ENCODE measurements at regions of chr17 and their contacts with region 1.

Region 1: GRCh38 chr17:57255776-57256681 is at the start of gene MSI2:
- DNase-seq: peak; percentile 82 to 96 (median 90)
- ATAC-seq: peak; percentile 71
- H3K4me3 ChIP-seq: peak within 1 kb of the TSS; percentile 74
- H3K4me3 Mint-ChIP-seq: peak within 1 kb of the TSS; percentile 99
- H3K27ac ChIP-seq: peak within 1 kb of the TSS; percentile 72 to 82
- H3K27ac Mint-ChIP-seq: peak within 1 kb of the TSS; percentile 98
- H3K4me1 ChIP-seq: peaks cover 35% of the 10 kb centered on the region
- H3K4me1 Mint-ChIP-seq: peaks cover 48% of the 10 kb centered on the region
- H3K27me3 ChIP-seq: no peaks in the 10 kb centered on the region
- H3K27me3 Mint-ChIP-seq: no peaks in the 10 kb centered on the region
- CTCF ChIP-seq: no peak
- total RNA-seq, gene MSI2: 129 to 132 TPM

Region 2: DNA sequence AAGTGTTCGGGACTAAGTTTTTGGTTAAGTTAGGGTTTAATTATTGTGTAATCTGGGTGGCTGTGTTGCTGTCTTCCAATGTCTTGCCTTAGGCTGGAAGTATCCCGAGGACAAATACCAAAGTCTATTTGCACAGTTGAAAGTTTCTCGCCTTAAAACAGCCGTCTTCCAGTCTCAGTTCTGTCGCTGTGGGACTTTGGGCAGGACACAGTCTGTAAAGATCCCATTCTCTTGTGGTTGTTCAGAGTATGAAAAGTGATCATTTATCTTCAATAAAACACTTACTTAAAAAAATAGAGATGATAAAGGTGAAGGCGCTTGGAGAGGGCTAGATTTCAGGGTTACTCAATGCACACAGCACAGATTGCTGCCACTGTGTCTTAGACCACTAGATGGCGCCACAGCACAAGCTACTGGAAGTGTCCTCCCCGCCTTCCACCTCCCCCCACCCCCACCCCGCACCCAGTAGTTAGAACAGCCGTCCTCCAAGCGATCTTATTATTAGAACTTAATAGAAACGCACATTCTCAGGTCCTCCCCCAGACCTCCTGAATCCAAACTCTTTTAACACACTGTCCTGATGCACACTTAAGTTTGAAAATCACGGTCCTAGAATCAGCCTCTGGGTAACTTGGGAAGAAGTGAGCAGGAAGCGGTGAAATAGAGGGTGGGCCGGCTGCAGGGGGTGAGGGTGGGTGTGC is 125.1 kb before region 1 on chr17:
- CTCF ChIA-PET with region 1: no interaction called
- POLR2A ChIA-PET with region 1: no interaction called
- intact Hi-C with region 1: no loop called
- DNase-seq: peak; percentile 72 to 91 (median 80)
- ATAC-seq: peak; percentile 97
- H3K4me3 ChIP-seq: no peak overlapping the region
- H3K4me3 Mint-ChIP-seq: no peak overlapping the region
- H3K27ac ChIP-seq: no peak overlapping the region
- H3K27ac Mint-ChIP-seq: no peak overlapping the region
- H3K4me1 ChIP-seq: peaks cover 4% of the 10 kb centered on the region
- H3K4me1 Mint-ChIP-seq: peaks cover 11% of the 10 kb centered on the region
- H3K27me3 ChIP-seq: no peaks in the 10 kb centered on the region
- H3K27me3 Mint-ChIP-seq: no peaks in the 10 kb centered on the region
- CTCF ChIP-seq: peak; percentile 77

Region 3: DNA sequence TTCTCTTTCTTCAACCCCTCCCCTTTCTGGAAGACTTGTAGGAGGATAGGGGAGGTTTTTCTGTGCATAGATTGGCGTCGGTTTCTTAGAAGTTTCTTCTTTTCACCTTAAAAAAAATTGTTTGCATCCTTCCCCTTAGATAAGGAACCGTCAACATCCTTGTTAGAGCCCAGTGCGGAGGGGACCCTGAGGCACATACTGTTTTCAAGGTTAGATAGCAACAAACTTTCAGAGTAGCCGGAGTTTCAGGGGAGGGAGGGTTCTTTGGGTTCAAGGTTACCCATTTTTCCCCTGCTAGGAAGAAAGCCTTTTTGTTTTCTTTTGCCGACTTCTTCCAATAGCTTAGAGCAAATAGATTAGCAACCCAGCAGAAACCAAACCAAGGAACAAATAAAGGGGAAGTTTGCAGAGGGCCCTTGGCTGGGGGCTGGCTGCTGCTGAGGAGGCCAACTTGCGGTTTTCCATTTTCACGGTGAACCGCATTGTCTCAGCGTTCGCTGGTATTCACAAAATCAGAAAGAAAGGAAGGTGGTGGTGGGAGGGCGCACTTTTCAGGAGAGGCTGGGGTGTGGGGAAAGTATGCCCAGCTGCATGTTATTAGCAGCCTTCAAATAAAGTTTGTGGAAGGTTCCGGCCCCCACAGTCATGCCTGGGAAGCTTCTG is 29.1 kb after region 1 on chr17:
- CTCF ChIA-PET with region 1: no interaction called
- POLR2A ChIA-PET with region 1: interaction called, 8 read pairs
- intact Hi-C with region 1: loop called in 1 of 2 experiments (anchors 1 kb)
- DNase-seq: peak in 9 of 14 experiments; percentile 6 to 65 (median 22)
- ATAC-seq: peak; percentile 27
- H3K4me3 ChIP-seq: peak overlapping the region; percentile 17
- H3K4me3 Mint-ChIP-seq: peak overlapping the region; percentile 76
- H3K27ac ChIP-seq: peak overlapping the region in 1 of 2 donors; percentile 4
- H3K27ac Mint-ChIP-seq: peak overlapping the region; percentile 80
- H3K4me1 ChIP-seq: peaks cover 46% of the 10 kb centered on the region
- H3K4me1 Mint-ChIP-seq: peaks cover 80% of the 10 kb centered on the region
- H3K27me3 ChIP-seq: no peaks in the 10 kb centered on the region
- H3K27me3 Mint-ChIP-seq: no peaks in the 10 kb centered on the region
- CTCF ChIP-seq: no peak

Region 4: DNA sequence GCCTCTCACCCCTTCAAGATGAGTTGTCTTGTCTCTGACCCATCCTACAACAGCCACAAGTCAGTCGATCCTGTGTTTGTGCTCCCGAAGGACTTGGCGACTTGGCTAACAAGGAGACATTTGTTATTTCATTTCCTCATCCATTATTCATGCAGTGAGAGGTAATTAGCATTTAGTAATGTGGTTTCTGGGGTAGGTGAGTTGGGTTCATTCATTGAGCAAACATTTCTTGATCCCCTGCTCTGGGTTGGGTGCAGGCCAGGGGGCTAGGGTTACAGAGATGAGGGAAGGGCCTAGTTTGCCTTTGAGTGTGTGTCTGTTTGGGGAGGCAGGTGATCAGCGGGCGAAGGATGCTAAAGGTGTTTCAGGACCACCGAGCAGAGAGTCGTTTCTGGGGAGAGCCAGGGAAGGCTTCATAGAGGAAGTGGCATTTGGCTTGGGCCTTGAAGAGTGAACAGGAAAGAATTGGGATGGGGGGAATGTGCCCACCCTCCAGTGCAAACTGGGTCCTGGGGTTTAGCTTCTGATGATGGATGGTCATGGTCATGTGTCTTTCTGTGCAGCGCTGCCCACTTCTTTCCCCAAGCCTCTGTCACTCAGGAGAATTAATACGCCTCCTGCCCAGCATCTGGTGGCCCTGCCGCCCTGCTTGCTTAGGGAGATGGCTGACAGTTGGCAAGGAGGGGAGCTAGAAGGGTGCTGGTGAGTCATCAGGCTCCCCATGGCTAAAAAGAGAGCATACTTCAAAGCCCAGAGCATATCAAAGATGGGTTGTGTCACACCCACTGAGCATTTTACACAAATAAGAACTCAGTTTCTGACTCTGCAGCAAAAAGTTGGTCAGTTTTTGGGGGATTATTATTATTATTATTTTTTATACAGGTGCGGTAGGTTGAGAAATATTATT is 38.9 kb after region 1 on chr17:
- CTCF ChIA-PET with region 1: no interaction called
- POLR2A ChIA-PET with region 1: no interaction called
- intact Hi-C with region 1: loop called in 1 of 2 experiments (anchors 5 kb)
- DNase-seq: peak in 13 of 14 experiments; percentile 10 to 66 (median 41)
- ATAC-seq: peak; percentile 90
- H3K4me3 ChIP-seq: no peak overlapping the region
- H3K4me3 Mint-ChIP-seq: no peak overlapping the region
- H3K27ac ChIP-seq: no peak overlapping the region
- H3K27ac Mint-ChIP-seq: peak overlapping the region; percentile 5
- H3K4me1 ChIP-seq: peaks cover 7% of the 10 kb centered on the region
- H3K4me1 Mint-ChIP-seq: peaks cover 59% of the 10 kb centered on the region
- H3K27me3 ChIP-seq: no peaks in the 10 kb centered on the region
- H3K27me3 Mint-ChIP-seq: no peaks in the 10 kb centered on the region
- CTCF ChIP-seq: no peak

Measured in CD4-positive, alpha-beta T cell (primary cell).